ENCODE measurements at regions of chr6 and their contacts with region 1.

Region 1: DNA sequence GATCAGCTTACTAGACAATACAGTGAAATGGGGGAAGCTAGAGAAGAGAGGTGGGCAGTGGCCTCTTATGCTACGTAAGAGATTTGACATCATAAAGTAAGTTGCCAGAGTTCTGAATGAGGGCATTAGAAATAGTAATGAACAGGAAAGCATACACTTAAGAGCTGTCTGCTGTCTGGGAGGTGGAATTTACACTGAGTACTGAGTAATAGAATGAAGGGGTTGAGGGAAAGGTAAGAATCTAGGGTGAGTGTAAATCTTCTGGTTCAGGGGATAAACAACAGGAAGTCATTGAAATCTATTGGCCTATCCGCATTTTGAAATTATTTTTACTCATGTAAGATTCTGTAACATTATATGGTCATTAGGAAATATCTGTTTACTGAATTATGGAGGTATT is 35.8 kb downstream of the HLA-DMB start:
- DNase-seq: no peak
- H3K4me3 Mint-ChIP-seq: no peak overlapping the region
- H3K27ac Mint-ChIP-seq: no peak overlapping the region
- H3K4me1 Mint-ChIP-seq: no peaks in the 10 kb centered on the region
- H3K27me3 Mint-ChIP-seq: no peaks in the 10 kb centered on the region
- CTCF ChIP-seq: no peak

Region 2: DNA sequence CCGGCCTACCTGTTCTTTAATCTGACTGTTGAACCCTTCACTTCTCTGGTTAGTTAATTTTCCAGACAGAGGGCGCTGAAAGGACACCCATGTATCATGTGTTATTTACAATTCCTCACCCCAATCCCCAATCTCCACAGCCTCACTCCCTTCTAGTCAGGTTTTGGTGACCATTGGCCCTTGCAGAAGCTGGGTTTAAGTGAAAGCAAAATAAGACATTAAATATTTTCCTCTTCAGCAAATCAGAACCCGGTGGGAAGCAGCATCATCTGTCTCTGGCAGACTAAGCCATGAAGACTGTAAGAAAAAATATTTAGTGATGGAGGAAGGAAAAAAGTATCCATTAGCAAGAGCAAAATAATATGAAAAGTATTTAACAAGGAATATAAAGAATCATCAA is 277.2 kb before region 1 on chr6:
- CTCF ChIA-PET with region 1: no interaction called
- POLR2A ChIA-PET with region 1: no interaction called
- intact Hi-C with region 1: no loop called
- DNase-seq: peak; percentile 34
- H3K4me3 Mint-ChIP-seq: no peak overlapping the region
- H3K27ac Mint-ChIP-seq: no peak overlapping the region
- H3K4me1 Mint-ChIP-seq: peaks cover 4% of the 10 kb centered on the region
- H3K27me3 Mint-ChIP-seq: no peaks in the 10 kb centered on the region
- CTCF ChIP-seq: no peak

Region 3: GRCh38 chr6:32894080-32895005 is 10.7 kb before region 1 on chr6:
- CTCF ChIA-PET with region 1: interaction called, 4 read pairs
- POLR2A ChIA-PET with region 1: interaction called, 23 read pairs
- intact Hi-C with region 1: no loop called
- DNase-seq: peak; percentile 90
- H3K4me3 Mint-ChIP-seq: peak overlapping the region; percentile 84
- H3K27ac Mint-ChIP-seq: peak overlapping the region; percentile 80
- H3K4me1 Mint-ChIP-seq: peaks cover 10% of the 10 kb centered on the region
- H3K27me3 Mint-ChIP-seq: no peaks in the 10 kb centered on the region
- CTCF ChIP-seq: no peak

Region 4: GRCh38 chr6:33061987-33062386 is 156.9 kb after region 1 on chr6:
- CTCF ChIA-PET with region 1: no interaction called
- POLR2A ChIA-PET with region 1: no interaction called
- intact Hi-C with region 1: no loop called
- DNase-seq: peak; percentile 23
- H3K4me3 Mint-ChIP-seq: no peak overlapping the region
- H3K27ac Mint-ChIP-seq: no peak overlapping the region
- H3K4me1 Mint-ChIP-seq: no peaks in the 10 kb centered on the region
- H3K27me3 Mint-ChIP-seq: peaks cover 64% of the 10 kb centered on the region
- CTCF ChIP-seq: no peak

Region 5: DNA sequence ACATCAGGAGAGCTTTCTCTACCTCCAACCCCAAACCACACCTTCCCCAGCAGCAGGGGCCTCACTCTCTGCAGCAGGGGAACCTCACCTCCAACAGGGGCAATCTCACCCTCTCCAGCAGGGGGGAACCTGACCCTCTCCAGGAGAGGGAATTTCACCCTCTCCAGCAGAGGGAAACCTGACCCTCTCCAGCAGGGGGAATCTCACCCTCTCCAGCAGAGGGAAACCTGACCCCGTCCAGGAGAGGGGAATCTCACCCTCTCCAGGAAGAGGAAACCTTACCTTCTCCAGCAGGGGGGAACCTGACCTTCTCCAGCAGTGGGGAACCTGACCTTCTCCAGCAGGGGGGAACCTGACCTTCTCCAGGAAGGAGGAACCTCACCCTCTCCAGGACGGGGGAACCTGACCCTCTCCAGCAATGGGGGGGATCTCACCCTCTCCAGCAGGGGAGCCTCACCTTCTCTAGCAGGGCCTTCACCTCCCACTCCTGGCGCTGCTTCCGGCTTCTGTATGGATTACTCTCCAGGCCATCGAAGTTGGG is 375.0 kb after region 1 on chr6:
- CTCF ChIA-PET with region 1: no interaction called
- POLR2A ChIA-PET with region 1: no interaction called
- intact Hi-C with region 1: no loop called
- DNase-seq: peak; percentile 74
- H3K4me3 Mint-ChIP-seq: no peak overlapping the region
- H3K27ac Mint-ChIP-seq: no peak overlapping the region
- H3K4me1 Mint-ChIP-seq: peaks cover 15% of the 10 kb centered on the region
- H3K27me3 Mint-ChIP-seq: no peaks in the 10 kb centered on the region
- CTCF ChIP-seq: peak; percentile 72

Measured in MCF 10A (cell line).